Activated T-helper 1 cell treated with anti-CD3 and anti-CD28 coated beads, Interleukin-12 subunit alpha, Interleukin-12 subunit beta, Interleukin-2, Interleukin-4 antibody, amounts not matched to agents 30 ng/mL and 10 ng/mL and 1 ng/mL, durations not matched to agents 14 hours and 24 hours and 36 hours (primary cell): ENCODE measurements at regions of chr16 and their contacts with region 1.

Region 1: DNA sequence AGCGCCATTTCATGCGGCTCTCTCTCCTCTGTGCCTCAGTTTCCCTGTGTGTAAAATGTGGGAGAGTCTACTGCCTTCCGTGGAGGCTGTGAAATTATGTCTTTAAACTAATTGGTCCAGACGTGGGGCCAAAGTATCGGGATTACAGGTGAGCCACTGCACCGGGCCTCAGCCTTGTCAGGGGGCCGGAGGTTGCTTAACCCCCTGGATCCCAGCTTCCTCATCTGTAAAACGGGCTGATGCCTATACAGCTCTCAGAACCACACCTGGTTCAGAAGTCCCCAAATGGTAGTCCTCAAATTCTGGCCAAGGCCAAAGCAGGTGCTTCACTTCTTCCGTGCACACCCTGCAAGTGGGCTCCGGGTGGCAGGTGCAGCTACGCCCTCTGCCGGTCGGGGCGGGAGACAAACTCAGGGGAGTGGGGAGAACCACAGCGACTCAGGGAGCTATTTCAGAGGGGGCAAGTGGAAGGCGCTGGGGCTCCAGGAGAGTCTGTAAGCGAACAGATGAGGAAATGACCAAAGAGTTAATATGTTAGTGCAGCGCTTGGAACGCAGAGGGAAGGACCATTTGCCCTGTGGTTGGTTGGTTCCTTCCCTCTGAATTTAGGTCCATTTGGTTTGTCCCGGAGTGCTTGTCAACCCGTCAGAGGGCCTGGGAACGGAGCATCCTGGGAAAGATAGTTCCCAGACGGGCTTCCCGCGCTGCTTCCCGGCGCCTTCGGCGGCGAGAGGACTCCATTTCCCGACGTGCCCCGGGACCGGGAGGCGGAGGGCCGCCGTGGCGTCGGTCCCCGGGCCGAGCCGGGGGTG is at the start of gene MGRN1:
- DNase-seq: peak; percentile 93
- H3K4me3 Mint-ChIP-seq: peak within 1 kb of the TSS; percentile 99
- H3K27ac Mint-ChIP-seq: peak within 1 kb of the TSS; percentile 95
- H3K4me1 Mint-ChIP-seq: peaks cover 22% of the 10 kb centered on the region
- H3K27me3 Mint-ChIP-seq: no peaks in the 10 kb centered on the region
- total RNA-seq, gene MGRN1: 110 and 119 TPM in 2 replicates

Region 2: GRCh38 chr16:4350787-4351659 is 273.2 kb before region 1 on chr16 and contains the start of gene PAM16:
- intact Hi-C with region 1: loop called (anchors 2 kb)
- DNase-seq: peak; percentile 99
- H3K4me3 Mint-ChIP-seq: peak within 1 kb of the TSS; percentile 97
- H3K27ac Mint-ChIP-seq: peak within 1 kb of the TSS; percentile 93
- H3K4me1 Mint-ChIP-seq: peaks cover 13% of the 10 kb centered on the region
- H3K27me3 Mint-ChIP-seq: no peaks in the 10 kb centered on the region
- total RNA-seq, gene PAM16: 91.5 and 106 TPM in 2 replicates

Region 3: GRCh38 chr16:4506450-4506849 is 117.8 kb before region 1 on chr16:
- intact Hi-C with region 1: loop called (anchors 1 kb)
- DNase-seq: peak; percentile 51
- H3K4me3 Mint-ChIP-seq: peak overlapping the region; percentile 70
- H3K27ac Mint-ChIP-seq: peak overlapping the region; percentile 79
- H3K4me1 Mint-ChIP-seq: peaks cover 48% of the 10 kb centered on the region
- H3K27me3 Mint-ChIP-seq: no peaks in the 10 kb centered on the region

Region 4: GRCh38 chr16:4660454-4661007 is 36.3 kb after region 1 on chr16:
- intact Hi-C with region 1: loop called (anchors 1 kb)
- DNase-seq: peak; percentile 60
- H3K4me3 Mint-ChIP-seq: peak overlapping the region; percentile 54
- H3K27ac Mint-ChIP-seq: peak overlapping the region; percentile 88
- H3K4me1 Mint-ChIP-seq: peaks cover 44% of the 10 kb centered on the region
- H3K27me3 Mint-ChIP-seq: no peaks in the 10 kb centered on the region

Region 5: GRCh38 chr16:4693296-4693955 is 69.2 kb after region 1 on chr16 and contains the start of gene NUDT16L1:
- intact Hi-C with region 1: loop called (anchors 2 kb)
- DNase-seq: peak; percentile 98
- H3K4me3 Mint-ChIP-seq: peak within 1 kb of the TSS; percentile 86
- H3K27ac Mint-ChIP-seq: peak within 1 kb of the TSS; percentile 84
- H3K4me1 Mint-ChIP-seq: no peaks in the 10 kb centered on the region
- H3K27me3 Mint-ChIP-seq: no peaks in the 10 kb centered on the region
- total RNA-seq, gene NUDT16L1: 39.9 and 41.9 TPM in 2 replicates

Region 6: DNA sequence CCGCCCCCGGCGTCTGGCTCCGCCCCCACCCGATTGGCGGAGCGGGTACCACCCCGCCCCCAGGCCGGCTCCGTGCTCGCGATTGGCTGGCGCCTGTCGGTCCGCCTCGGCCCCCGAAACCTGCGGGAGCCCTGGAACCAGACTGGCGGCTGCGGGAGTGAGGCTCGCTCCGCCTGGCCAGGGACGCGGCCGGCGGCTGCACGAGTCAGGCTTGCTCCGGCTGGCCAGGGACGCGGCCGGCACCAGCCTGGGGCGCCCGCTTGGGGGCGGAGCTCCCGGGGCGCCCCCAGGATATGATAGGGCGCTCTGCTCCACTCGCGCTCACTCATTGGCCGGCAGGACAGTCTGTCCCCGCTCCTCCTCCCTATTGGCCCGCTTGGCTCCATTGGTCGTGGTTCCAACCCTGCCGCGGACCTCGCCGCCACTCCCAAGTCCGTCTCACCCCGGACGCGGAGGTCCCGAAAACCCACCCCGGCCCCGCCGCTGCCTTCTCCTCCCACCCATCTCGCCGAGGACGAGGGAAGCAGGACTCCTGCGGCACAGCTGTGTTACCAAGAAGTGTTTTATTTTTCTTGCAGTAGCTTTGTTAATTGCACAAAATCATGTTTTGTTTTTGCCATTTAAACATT is 178.6 kb after region 1 on chr16:
- intact Hi-C with region 1: loop called (anchors 2 kb)
- DNase-seq: peak; percentile 89
- H3K4me3 Mint-ChIP-seq: peak overlapping the region; percentile 80
- H3K27ac Mint-ChIP-seq: no peak overlapping the region
- H3K4me1 Mint-ChIP-seq: peaks cover 9% of the 10 kb centered on the region
- H3K27me3 Mint-ChIP-seq: no peaks in the 10 kb centered on the region